ENCODE measurements at regions of chr2 and their contacts with region 1.

Region 1: GRCh38 chr2:201130524-201131186 is 14.7 kb downstream of the CFLAR start:
- DNase-seq: peak in 2 of 3 donors; percentile 61 to 74
- H3K4me3 ChIP-seq: peak overlapping the region in 1 of 7 experiments; percentile 36
- H3K27ac ChIP-seq: peak overlapping the region in 1 of 2 experiments; percentile 54
- H3K4me1 ChIP-seq: peaks cover 51 to 76% (median 71%) of the 10 kb centered on the region in 4 experiments
- H3K27me3 ChIP-seq: no peaks in the 10 kb centered on the region

Region 2: DNA sequence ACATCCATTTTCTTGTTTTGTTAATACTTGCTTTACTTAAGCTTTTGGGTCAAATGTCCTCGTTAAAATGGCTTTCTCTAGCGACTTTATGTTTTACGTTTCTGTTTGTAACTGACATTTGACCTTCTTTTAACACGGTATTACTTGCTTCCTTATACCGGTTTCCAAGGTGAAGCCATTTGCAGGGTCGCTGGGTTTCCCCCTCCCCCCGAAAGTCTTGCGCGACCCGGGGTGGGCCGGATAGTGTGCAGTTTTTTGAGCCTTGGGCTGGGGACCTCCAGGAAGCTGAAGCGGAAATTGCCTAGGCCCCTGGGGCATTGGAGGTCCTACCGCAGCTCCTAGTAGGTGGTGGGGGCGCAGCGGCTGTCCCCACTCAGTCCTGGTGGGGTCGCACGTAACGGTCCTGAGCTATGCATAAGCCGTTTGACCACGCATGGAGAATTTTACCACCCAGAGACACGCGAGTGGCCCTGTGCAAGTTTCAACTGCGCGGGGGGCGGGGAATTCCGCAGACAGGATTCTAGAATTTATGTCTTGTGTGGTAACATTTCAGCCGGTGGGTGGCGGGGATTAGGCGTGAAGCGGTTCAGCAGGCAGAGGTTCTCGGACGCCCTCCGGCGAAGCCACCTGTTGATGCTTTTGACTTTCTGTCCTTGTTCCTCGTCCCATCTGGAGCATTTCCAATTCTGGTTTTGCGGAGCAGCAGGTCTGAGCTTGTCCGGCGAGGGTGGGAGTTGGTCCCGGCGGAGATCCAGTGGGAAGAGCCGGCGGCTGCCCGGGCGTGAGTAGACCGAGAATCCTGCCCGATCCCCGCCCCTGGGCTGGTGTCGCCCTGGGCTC is 12.3 kb before region 1 on chr2:
- CTCF ChIA-PET with region 1: interaction called, 24 read pairs
- POLR2A ChIA-PET with region 1: no interaction called
- DNase-seq: peak; percentile 94 to 95 (median 94)
- H3K4me3 ChIP-seq: peak overlapping the region; percentile 88 to 100 (median 95)
- H3K27ac ChIP-seq: peak overlapping the region; percentile 93 to 97
- H3K4me1 ChIP-seq: peaks cover 33 to 69% (median 62%) of the 10 kb centered on the region in 4 experiments
- H3K27me3 ChIP-seq: no peaks in the 10 kb centered on the region

Region 3: GRCh38 chr2:201151127-201151981 is 20.7 kb after region 1 on chr2:
- CTCF ChIA-PET with region 1: interaction called, 10 read pairs
- POLR2A ChIA-PET with region 1: no interaction called
- DNase-seq: peak; percentile 42 to 86 (median 77)
- H3K4me3 ChIP-seq: no peak overlapping the region
- H3K27ac ChIP-seq: peak overlapping the region; percentile 29 to 76
- H3K4me1 ChIP-seq: peaks cover 0 to 24% (median 14%) of the 10 kb centered on the region in 4 experiments
- H3K27me3 ChIP-seq: no peaks in the 10 kb centered on the region

Measured in common myeloid progenitor, CD34-positive (primary cell).